Right cardiac atrium (tissue), 5 donors: ENCODE measurements at regions of chr14 and their contacts with region 1.

Region 1: GRCh38 chr14:76050797-76051392 is 65.3 kb downstream of the IFT43 start:
- DNase-seq: no peak
- ATAC-seq: peak; percentile 72 to 75
- H3K4me3 ChIP-seq: no peak overlapping the region
- H3K27ac ChIP-seq: no peak overlapping the region
- H3K4me1 ChIP-seq: no peaks in the 10 kb centered on the region
- H3K27me3 ChIP-seq: no peaks in the 10 kb centered on the region

Region 2: DNA sequence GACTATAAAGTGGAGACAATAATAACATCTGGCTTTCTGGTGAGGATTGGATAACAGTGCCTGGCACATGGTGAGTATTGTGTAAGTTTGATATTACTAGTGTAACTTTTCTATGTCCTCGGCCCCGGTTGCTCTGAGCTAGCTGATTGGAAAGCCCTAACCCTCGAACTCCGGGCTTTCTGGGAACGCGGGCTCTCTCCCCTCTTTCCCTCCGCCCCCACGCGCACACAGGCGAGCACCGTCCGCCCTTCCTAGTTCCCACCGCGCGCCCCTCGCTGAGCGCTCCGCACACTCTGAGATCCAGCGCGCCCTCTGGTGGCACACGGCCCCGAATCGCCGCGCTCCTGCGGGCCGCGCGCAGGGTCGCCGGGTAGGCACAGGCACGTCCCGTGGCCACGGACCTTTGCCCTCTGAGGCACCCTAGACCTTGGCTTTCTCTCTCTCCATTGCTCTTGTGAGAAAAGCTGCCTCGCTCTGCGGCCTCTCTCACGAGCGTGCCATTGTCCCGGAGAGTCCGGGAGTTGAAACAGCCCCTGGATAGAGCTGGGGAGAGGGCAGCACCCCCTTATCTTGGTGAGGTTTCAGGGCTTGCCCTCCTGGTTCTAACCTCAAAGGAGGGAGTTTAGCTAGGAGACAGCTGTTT is 301.9 kb after region 1 on chr14:
- intact Hi-C with region 1: loop called (anchors 5 to 10 kb)
- DNase-seq: peak; percentile 62 to 87 (median 85)
- ATAC-seq: peak; percentile 72 to 80
- H3K4me3 ChIP-seq: no peak overlapping the region
- H3K27ac ChIP-seq: no peak overlapping the region
- H3K4me1 ChIP-seq: no peaks in the 10 kb centered on the region
- H3K27me3 ChIP-seq: no peaks in the 10 kb centered on the region

Region 3: DNA sequence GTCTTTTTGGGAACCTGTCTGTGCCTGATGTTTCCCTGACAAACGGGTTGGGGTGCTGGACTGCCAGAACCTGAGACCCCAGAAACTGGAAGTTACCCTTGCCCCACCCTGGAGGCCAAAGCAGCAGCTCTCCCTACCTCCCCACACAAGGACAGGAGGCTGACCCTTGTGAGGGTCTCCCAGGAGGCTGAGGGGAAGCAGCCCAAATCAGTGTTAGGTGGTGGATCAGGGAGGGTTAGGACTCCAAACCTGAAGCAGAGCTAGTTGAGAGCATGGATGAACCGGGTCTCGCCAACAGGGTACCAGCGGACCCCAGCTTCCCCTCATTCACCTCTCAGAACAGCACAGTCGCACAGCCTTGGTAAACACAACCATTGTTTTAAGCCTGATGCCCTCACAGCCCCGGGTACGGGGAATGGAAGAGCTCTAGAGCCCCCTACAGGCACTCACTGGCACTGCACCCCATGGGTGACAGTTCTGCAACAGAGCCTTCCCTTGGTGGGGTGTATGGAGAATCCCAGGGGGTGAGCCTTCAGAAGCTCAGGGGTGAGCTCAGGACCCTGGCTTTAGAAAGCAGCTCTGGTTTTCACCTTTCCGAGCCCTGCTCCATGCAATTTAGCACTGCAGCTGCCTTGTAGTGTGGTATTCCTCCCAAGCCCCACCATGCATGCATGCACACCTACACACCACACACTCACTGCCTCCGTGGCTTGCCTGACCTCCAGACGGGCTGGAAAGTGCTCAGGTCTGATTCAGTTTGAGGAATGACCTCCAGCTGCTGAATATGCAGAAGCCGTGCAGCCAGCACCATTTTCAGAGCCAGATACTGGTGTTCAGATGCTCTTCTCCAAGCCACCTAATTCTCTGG is 336.3 kb after region 1 on chr14:
- intact Hi-C with region 1: loop called in 2 of 4 experiments (anchors 10 kb)
- DNase-seq: peak; percentile 54 to 84 (median 81)
- ATAC-seq: peak; percentile 86 to 87
- H3K4me3 ChIP-seq: no peak overlapping the region
- H3K27ac ChIP-seq: no peak overlapping the region
- H3K4me1 ChIP-seq: no peaks in the 10 kb centered on the region
- H3K27me3 ChIP-seq: no peaks in the 10 kb centered on the region

Region 4: GRCh38 chr14:76647697-76648298 is 596.9 kb after region 1 on chr14:
- intact Hi-C with region 1: loop called in 1 of 4 experiments (anchors 10 kb)
- DNase-seq: no peak
- ATAC-seq: peak; percentile 60 to 70
- H3K4me3 ChIP-seq: no peak overlapping the region
- H3K27ac ChIP-seq: no peak overlapping the region
- H3K4me1 ChIP-seq: no peaks in the 10 kb centered on the region
- H3K27me3 ChIP-seq: no peaks in the 10 kb centered on the region